Left lung (tissue), 14 donors: ENCODE measurements at regions of chr10 and their contacts with region 1.

Region 1: DNA sequence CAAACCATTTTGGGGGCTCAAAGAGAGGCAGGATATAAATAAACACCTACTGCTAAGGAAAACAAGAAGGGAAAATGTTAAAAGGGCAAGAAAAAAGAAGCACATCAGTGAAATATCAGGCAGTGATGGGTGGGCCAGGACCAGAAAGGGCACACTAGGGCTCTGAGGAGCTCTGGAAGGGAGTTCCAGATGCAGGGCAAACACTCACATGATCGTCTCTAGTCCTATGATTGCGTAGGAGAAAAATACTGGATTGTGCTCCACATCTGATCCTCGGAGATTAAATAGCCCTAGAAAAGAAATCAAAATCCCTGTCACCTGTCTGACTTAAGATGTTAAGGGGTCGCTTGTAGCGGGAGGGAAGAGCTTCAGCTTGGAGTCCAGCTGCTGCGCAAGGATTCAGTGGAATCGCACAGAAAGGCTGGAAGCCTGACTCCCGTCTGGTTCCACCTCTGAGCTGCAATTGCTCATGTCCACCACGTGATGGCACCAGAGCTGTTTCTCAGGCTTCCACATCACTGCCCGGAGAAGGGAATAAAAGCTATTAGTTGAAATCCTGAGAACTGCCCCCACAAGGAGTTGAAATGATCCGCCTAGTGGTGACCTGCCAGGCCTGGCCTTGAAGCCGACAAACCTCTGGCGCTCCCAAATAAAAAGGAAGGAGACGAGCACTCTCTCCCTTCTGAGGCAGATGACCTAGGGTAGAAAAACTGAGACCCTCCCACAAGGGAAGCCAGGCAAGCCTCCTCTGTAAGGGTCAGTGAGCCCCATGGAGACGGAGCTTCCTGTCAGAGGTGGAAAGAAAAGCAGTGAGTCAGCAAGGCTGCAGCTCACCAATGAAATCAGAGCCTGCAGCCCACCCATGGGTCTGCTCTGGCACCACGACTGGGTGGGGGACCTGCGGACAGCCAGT is 39.2 kb downstream of the XPNPEP1 start:
- DNase-seq: peak in 3 of 4 donors; percentile 67 to 93 (median 83)
- ATAC-seq: peak; percentile 96
- H3K4me3 ChIP-seq: no peak overlapping the region
- H3K27ac ChIP-seq: no peak overlapping the region
- H3K4me1 ChIP-seq: peaks cover 0 to 12% of the 10 kb centered on the region in 2 donors
- H3K27me3 ChIP-seq: no peaks in the 10 kb centered on the region
- CTCF ChIP-seq: peak; percentile 92 to 93

Region 2: DNA sequence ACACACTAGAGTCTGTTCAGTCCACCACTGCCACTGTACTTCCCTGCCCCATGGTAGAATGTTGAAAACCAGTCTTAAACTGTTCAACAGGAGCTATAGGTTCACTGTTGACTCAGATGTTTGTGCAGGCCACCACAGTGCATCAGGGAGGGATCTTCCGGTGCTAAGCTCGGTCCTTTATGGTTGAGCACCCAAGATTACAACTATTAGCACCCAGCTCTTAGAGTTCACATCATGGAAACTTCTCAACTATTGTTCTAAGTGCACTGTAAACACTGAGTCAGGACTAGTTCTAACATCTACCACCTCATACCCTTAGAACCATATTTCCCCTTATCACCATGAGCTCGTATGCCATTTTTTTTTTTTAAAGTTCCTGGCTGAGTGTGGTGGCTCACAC is 226.2 kb after region 1 on chr10:
- intact Hi-C with region 1: loop called in 1 of 2 experiments (anchors 10 kb)
- DNase-seq: no peak
- ATAC-seq: peak; percentile 64
- H3K4me3 ChIP-seq: no peak overlapping the region
- H3K27ac ChIP-seq: no peak overlapping the region
- H3K4me1 ChIP-seq: no peaks in the 10 kb centered on the region
- H3K27me3 ChIP-seq: no peaks in the 10 kb centered on the region
- CTCF ChIP-seq: no peak

Region 3: GRCh38 chr10:110285501-110285900 is 401.4 kb after region 1 on chr10:
- intact Hi-C with region 1: loop called in 1 of 2 experiments (anchors 10 kb)
- DNase-seq: no peak
- ATAC-seq: no peak
- H3K4me3 ChIP-seq: no peak overlapping the region
- H3K27ac ChIP-seq: no peak overlapping the region
- H3K4me1 ChIP-seq: no peaks in the 10 kb centered on the region
- H3K27me3 ChIP-seq: no peaks in the 10 kb centered on the region
- CTCF ChIP-seq: no peak